AG04450 (cell line): ENCODE measurements at regions of chr14 and their contacts with region 1.

Region 1: GRCh38 chr14:37230551-37231194 is 32.9 kb downstream of the MIPOL1 start:
- DNase-seq: peak; percentile 38
- H3K4me3 ChIP-seq: no peak overlapping the region
- H3K27ac ChIP-seq: no peak overlapping the region
- H3K27me3 ChIP-seq: no peaks in the 10 kb centered on the region
- CTCF ChIP-seq: peak; percentile 76

Region 2: GRCh38 chr14:37197421-37198272 is 33.0 kb before region 1 on chr14 and contains the start of gene MIPOL1:
- CTCF ChIA-PET with region 1: interaction called, 14 read pairs
- POLR2A ChIA-PET with region 1: no interaction called
- DNase-seq: peak; percentile 69
- H3K4me3 ChIP-seq: peak within 1 kb of the TSS; percentile 88
- H3K27ac ChIP-seq: peak within 1 kb of the TSS; percentile 95
- H3K27me3 ChIP-seq: no peaks in the 10 kb centered on the region
- CTCF ChIP-seq: peak; percentile 41
- polyA plus RNA-seq, gene MIPOL1: 4.8 and 7.0 TPM in 2 replicates

Region 3: DNA sequence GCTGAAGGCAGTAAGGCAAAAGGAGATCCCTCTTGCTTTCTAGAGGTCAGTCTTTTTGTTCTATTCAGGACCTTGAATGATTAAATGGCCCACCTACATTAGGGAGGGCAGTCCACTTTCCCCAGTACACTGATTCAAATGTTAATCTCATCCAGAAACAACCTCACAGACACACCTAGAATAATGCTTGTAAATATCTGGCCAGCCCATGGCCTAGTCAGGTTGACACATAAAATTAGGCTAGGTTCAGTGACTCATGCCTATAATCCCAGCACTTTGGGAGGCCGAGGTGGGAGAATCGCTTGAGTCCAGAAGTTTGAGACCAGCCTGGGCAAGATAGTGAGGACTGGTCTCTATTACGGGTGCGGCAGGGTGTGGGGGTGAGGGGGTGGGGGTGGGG is 10.5 kb after region 1 on chr14:
- CTCF ChIA-PET with region 1: interaction called, 86 read pairs
- POLR2A ChIA-PET with region 1: no interaction called
- DNase-seq: no peak
- H3K4me3 ChIP-seq: no peak overlapping the region
- H3K27ac ChIP-seq: no peak overlapping the region
- H3K27me3 ChIP-seq: no peaks in the 10 kb centered on the region
- CTCF ChIP-seq: no peak

Region 4: DNA sequence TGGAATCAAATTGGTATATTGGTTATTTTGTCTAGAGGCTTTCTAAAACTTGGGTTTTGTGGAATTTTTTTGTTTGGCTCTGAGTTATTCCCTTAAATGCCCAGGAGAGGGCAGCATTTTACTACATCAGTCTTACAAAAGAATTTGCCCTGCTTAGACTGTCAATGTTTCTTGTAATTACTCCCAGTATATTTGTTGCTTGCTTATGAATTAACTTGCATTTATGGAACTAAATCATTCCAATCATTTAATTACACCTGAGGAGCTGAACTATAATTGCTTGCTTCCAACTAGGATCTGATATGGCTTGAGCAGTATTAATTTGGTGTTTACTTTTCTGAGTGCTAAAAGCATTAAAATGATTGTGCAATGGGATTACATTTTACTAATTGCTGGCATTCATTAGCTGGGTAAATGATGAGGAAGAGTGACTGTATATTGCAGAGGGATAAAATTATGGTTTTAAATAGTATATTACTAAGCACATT is 15.8 kb after region 1 on chr14:
- CTCF ChIA-PET with region 1: interaction called, 86 read pairs
- POLR2A ChIA-PET with region 1: no interaction called
- DNase-seq: peak; percentile 27
- H3K4me3 ChIP-seq: no peak overlapping the region
- H3K27ac ChIP-seq: no peak overlapping the region
- H3K27me3 ChIP-seq: no peaks in the 10 kb centered on the region
- CTCF ChIP-seq: peak; percentile 72

Region 5: GRCh38 chr14:37253905-37254304 is 23.2 kb after region 1 on chr14:
- CTCF ChIA-PET with region 1: interaction called, 29 read pairs
- POLR2A ChIA-PET with region 1: no interaction called
- DNase-seq: peak; percentile 16
- H3K4me3 ChIP-seq: no peak overlapping the region
- H3K27ac ChIP-seq: no peak overlapping the region
- H3K27me3 ChIP-seq: no peaks in the 10 kb centered on the region
- CTCF ChIP-seq: no peak

Region 6: DNA sequence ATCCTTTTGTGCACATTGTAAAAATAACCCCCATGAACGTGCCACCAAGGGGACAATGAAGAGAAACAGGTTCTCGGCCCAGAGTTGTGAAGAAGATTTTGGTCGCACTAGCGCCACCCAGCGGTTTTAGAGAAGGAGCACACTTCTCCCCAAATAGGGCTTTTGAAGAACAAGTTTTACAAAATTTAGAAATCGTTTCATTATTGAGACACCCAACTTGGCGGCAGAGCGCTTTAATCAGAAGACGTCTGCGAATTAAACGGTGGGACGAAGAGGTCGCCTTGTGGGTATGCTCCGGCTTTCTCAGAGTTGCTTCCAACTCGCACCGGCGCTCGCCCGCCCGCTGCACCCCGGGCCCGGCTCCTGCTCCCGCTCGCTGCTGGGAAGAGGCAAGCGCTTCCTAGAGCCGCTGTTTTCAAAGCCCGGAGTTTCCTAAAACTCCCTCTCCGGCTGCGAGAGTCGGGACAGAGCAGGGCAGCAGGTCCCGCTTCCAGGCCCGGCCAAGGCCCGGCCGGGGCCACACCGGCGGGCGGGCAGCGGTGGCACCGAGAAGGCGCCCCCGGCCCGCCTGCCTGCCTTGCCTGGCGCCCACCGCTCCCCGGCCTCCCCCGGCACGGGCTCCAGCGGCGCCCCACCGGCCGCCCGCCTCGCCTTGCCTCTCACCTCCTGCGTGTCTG is 363.7 kb after region 1 on chr14:
- CTCF ChIA-PET with region 1: interaction called, 22 read pairs
- POLR2A ChIA-PET with region 1: no interaction called
- DNase-seq: peak; percentile 32
- H3K4me3 ChIP-seq: peak overlapping the region; percentile 61
- H3K27ac ChIP-seq: no peak overlapping the region
- H3K27me3 ChIP-seq: peaks cover 77% of the 10 kb centered on the region
- CTCF ChIP-seq: peak; percentile 86

Region 7: GRCh38 chr14:37874429-37875191 is 643.9 kb after region 1 on chr14:
- CTCF ChIA-PET with region 1: interaction called, 81 read pairs
- POLR2A ChIA-PET with region 1: no interaction called
- DNase-seq: peak; percentile 20
- H3K4me3 ChIP-seq: no peak overlapping the region
- H3K27ac ChIP-seq: no peak overlapping the region
- H3K27me3 ChIP-seq: no peaks in the 10 kb centered on the region
- CTCF ChIP-seq: peak; percentile 93